Posterior vena cava (tissue), 2 donors: ENCODE measurements at regions of chr13 and their contacts with region 1.

Region 1: DNA sequence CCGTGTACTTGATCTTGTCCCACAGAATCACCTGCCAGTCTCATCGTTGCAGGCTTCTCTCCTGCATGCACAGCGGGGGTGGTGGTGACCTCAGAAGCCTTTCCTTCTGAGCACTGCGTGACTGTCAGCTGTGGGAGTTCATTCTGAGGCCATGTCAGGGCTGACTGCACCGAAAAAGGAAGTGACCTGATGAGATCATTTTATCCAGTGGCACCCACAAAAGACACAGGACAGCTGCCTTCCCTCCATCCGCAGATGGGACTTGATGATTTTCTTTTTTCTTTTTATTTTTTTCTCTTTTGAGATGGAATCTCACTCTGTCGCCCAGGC is 89.7 kb downstream of the RAB20 start:
- DNase-seq: no peak

Region 2: GRCh38 chr13:109836629-109837607 is 634.9 kb before region 1 on chr13:
- intact Hi-C with region 1: no loop called
- DNase-seq: no peak

Region 3: GRCh38 chr13:110340812-110341444 is 130.9 kb before region 1 on chr13:
- intact Hi-C with region 1: no loop called
- DNase-seq: peak; percentile 98

Region 4: DNA sequence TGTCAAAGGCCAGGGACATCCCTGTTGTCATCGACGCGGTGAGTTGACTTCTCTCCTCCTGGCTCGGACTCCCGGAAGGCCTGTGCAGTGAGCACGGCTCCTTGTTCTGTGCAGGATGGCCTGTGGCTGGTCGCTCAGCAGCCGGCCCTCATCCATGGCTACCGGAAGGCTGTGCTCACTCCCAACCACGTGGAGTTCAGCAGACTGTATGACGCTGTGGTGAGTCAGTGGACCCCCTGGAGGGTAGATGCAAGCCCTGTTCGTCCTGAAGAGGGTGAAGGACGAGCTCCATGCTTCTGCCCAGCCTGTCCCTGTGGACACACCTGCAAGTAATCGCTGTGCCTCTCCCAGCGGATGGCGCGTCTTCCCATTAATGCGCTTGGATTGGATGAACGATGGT is 162.8 kb after region 1 on chr13:
- intact Hi-C with region 1: loop called in 1 of 2 experiments (anchors 10 kb)
- DNase-seq: peak; percentile 49

Region 5: DNA sequence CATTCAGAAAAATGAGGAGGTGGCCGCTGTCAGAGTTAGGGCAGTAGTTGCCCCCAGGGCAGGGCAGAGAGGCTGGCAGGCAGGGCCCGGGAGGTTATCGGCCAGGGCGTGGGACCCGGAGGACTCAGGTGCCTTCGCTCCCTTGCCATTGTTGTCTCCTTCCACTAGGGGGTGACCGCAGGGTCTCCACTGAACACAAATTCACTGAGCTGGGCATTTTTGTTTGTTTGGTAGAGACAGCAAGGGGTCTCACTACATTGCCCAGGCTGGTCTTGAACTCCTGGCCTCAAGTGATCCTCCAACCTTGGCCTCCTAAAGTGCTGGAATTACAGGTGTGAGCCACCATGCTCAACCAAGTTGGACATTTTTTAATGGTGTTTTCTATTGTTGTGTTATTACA is 209.1 kb after region 1 on chr13:
- intact Hi-C with region 1: no loop called
- DNase-seq: no peak

Region 6: GRCh38 chr13:111437856-111438547 is 966.2 kb after region 1 on chr13:
- intact Hi-C with region 1: no loop called
- DNase-seq: no peak